Right ventricle myocardium inferior (tissue), 1 donor: ENCODE measurements at regions of chr5 and their contacts with region 1.

Region 1: DNA sequence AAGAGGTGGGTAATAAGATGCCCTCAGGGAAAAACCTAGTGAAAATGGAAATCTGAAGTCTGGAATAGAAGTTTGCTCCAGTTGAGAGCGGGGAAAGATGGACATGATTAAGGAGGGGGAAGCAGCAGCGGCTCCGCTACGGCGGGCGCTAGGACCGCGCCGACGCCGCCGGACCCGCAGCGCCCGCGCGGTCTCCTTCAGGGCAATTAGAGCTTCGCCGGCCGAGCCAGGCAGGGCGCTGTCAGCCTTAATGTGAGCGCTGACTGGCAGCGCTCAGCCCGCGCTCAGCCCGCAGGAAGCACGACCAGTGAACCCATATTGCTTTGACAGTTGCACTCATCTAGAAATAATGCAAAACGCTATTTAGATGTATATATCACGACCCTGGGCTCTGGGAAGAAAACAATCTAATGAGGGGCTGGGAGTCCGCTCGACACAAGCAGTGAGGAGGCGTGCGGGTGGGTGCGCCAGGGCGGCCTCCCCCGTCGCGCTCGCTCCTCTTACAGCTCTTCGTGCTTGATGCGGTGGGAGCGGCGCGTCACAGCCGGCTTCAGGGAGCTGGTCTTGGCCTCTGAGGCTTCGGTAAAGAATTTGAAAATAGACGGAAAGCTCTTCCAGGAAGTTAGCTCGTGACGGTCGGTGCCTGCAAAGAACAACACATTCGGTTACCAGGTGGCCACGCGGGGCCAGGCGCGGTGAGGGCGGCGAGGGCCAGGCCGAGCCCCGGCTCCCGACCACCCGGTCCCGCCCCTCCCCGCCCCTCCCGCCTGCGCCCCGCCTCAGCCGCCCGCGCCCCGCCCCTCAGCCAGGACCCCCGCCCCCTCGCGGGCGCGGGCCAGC is 37.7 kb downstream of the NR2F1 start:
- DNase-seq: peak; percentile 86
- ATAC-seq: peak; percentile 92

Region 2: GRCh38 chr5:93789173-93790070 is 168.7 kb after region 1 on chr5:
- intact Hi-C with region 1: loop called (anchors 10 kb)
- DNase-seq: no peak
- ATAC-seq: no peak

Region 3: DNA sequence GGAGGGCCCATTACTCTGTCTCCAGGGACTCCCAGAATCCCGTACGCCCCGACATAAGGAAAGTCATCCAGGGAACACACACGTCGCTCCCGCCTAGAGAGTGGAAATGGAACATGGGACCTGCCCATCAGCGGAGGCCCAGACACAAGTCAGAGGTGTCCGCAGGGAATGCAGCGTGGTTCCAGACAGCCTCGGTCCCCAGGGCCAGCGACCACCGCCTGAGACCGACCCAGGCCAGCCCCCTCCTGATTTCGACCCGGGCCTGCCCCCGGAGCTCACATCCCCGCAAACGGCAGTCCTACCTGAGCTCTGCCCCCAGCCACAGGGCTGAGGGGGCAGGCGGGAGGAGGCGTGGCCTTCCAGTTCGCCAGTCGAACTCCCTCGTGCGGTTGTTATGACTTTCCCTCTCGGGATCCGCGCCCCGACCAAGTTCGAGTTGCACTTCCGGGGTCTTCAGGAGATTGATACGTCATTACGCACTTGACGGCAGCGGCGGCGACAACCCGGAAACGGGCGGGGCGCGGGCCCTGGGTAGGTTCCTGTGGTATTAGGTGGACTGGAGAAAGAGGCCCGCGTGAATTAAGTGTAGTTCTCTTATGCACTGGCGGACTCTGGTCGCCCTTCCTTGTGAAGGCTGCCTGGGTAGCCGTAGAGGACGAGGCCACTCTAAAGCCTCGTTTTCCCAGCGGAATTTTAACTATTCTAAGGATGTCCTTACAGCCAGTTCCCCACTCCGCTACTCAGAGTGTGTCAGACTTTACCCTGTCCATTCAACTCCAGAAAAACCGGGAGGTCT is 490.7 kb after region 1 on chr5:
- intact Hi-C with region 1: loop called (anchors 10 kb)
- DNase-seq: peak; percentile 97
- ATAC-seq: peak; percentile 99

Region 4: DNA sequence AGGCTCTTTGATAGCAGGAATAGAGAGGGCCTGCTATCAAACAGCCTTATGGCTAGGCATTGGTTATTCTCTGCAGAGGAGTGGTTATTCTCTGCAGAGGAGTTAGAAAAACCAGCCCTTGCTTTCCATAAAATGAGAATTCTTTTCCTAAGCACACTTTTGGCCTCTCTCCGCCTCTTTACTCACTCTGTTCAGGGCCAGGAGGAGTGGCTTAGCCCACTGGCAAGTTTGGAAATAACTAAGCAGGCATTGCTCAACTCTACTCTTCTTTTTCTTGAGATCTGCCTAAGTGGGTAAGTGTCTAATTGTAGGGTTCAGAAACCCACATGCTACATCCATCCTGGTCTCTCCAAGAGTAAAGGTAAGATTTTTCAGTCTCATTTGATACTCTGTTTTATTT is 656.0 kb after region 1 on chr5:
- intact Hi-C with region 1: no loop called
- DNase-seq: no peak
- ATAC-seq: no peak